Activated CD4-positive, alpha-beta memory T cell treated with anti-CD3 and anti-CD28 coated beads for 36 hours (primary cell): ENCODE measurements at regions of chr12 and their contacts with region 1.

Region 1: DNA sequence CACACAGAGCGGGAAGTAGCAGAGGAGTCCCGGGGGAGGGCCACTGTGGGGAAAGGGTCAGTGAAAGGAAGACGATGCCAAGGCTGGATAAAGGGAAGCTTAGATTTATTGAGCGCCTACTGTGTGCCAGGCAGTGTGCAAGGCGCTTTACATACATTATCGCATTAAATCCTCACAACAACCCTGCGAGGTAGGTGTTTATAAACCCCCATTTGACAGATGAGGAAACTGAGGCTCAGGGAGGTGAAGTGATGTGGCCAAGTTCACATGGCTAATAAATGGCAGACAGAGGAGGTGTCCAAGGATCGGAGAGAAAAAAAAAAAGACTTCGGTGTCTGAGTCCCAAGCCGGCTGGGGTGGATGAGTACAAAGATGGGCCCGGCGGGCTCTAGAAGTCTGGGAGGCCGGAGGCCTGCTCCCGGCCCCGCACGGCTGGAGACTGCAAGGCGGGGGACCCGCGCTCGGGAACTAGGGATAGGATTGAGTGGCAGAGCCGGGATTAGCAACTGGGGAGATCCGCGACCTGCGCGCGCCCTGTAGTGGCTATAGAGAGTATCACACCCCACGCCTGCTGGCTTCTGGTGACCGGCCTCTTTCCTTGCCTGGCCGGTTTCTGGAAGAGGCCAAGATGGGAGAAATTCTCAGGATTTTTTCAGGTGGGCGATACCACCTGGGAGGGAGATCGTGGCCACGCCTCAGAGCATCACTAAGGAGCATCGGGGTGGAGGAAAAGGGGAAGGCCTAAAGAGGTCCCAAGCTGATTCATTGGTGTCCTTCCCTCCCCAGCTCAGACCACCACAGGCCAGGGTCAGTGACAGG is 3.9 kb downstream of the DDN start:
- DNase-seq: peak; percentile 72
- H3K4me3 Mint-ChIP-seq: no peak overlapping the region
- H3K27ac Mint-ChIP-seq: no peak overlapping the region
- H3K4me1 Mint-ChIP-seq: peaks cover 32% of the 10 kb centered on the region
- H3K27me3 Mint-ChIP-seq: peaks cover 37% of the 10 kb centered on the region

Region 2: GRCh38 chr12:48924617-48925303 is 70.5 kb before region 1 on chr12:
- CTCF ChIA-PET with region 1: interaction called, 4 read pairs
- POLR2A ChIA-PET with region 1: interaction called, 4 read pairs
- intact Hi-C with region 1: loop called (anchors 2 kb)
- DNase-seq: peak; percentile 82
- H3K4me3 Mint-ChIP-seq: peak overlapping the region; percentile 88
- H3K27ac Mint-ChIP-seq: peak overlapping the region; percentile 94
- H3K4me1 Mint-ChIP-seq: peaks cover 47% of the 10 kb centered on the region
- H3K27me3 Mint-ChIP-seq: no peaks in the 10 kb centered on the region

Region 3: GRCh38 chr12:48957141-48958048 is 37.9 kb before region 1 on chr12 and contains the start of gene ARF3:
- CTCF ChIA-PET with region 1: interaction called, 12 read pairs
- POLR2A ChIA-PET with region 1: interaction called, 3 read pairs
- intact Hi-C with region 1: no loop called
- DNase-seq: peak; percentile 95
- H3K4me3 Mint-ChIP-seq: peak within 1 kb of the TSS; percentile 86
- H3K27ac Mint-ChIP-seq: peak within 1 kb of the TSS; percentile 83
- H3K4me1 Mint-ChIP-seq: peaks cover 28% of the 10 kb centered on the region
- H3K27me3 Mint-ChIP-seq: no peaks in the 10 kb centered on the region
- total RNA-seq, gene ARF3: 110 to 121 TPM

Region 4: GRCh38 chr12:49018261-49019119 is 23.2 kb after region 1 on chr12 and contains the start of gene PRKAG1:
- CTCF ChIA-PET with region 1: interaction called, 46 read pairs
- POLR2A ChIA-PET with region 1: interaction called, 5 read pairs
- intact Hi-C with region 1: loop called (anchors 1 kb)
- DNase-seq: peak; percentile 97
- H3K4me3 Mint-ChIP-seq: peak within 1 kb of the TSS; percentile 95
- H3K27ac Mint-ChIP-seq: peak within 1 kb of the TSS; percentile 92
- H3K4me1 Mint-ChIP-seq: peaks cover 40% of the 10 kb centered on the region
- H3K27me3 Mint-ChIP-seq: no peaks in the 10 kb centered on the region
- total RNA-seq, gene PRKAG1: 52.0 to 55.8 TPM

Region 5: GRCh38 chr12:49138587-49138986 is 143.3 kb after region 1 on chr12:
- CTCF ChIA-PET with region 1: no interaction called
- POLR2A ChIA-PET with region 1: no interaction called
- intact Hi-C with region 1: no loop called
- DNase-seq: no peak
- H3K4me3 Mint-ChIP-seq: no peak overlapping the region
- H3K27ac Mint-ChIP-seq: no peak overlapping the region
- H3K4me1 Mint-ChIP-seq: peaks cover 7% of the 10 kb centered on the region
- H3K27me3 Mint-ChIP-seq: no peaks in the 10 kb centered on the region

Region 6: DNA sequence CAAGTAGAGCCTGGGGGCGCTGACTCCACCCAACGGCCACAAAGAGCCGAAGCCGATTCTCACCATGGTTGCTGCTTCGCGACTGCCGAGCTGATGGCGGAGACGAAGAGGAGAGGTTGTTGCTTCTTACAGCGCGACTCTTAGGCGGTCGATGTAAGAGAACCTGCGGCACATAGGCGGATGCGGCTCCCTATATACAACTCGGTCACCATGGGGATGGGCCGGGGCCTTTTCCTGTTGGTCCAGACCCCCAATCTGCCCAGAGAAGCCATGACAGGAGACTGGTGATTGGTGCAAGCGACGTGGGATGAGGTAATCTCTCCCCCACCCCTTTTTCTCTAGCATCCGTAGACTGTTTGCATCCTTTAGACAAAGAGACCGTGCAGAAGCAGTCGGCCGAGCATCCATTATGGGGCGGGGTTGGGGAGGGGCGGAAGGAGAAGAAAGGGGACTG is 193.7 kb after region 1 on chr12 and contains the start of gene TUBA1A:
- CTCF ChIA-PET with region 1: no interaction called
- POLR2A ChIA-PET with region 1: no interaction called
- intact Hi-C with region 1: no loop called
- DNase-seq: peak; percentile 97
- H3K4me3 Mint-ChIP-seq: peak within 1 kb of the TSS; percentile 90
- H3K27ac Mint-ChIP-seq: peak within 1 kb of the TSS; percentile 95
- H3K4me1 Mint-ChIP-seq: peaks cover 16% of the 10 kb centered on the region
- H3K27me3 Mint-ChIP-seq: no peaks in the 10 kb centered on the region
- total RNA-seq, gene TUBA1A: 86.4 to 88.7 TPM

Region 7: DNA sequence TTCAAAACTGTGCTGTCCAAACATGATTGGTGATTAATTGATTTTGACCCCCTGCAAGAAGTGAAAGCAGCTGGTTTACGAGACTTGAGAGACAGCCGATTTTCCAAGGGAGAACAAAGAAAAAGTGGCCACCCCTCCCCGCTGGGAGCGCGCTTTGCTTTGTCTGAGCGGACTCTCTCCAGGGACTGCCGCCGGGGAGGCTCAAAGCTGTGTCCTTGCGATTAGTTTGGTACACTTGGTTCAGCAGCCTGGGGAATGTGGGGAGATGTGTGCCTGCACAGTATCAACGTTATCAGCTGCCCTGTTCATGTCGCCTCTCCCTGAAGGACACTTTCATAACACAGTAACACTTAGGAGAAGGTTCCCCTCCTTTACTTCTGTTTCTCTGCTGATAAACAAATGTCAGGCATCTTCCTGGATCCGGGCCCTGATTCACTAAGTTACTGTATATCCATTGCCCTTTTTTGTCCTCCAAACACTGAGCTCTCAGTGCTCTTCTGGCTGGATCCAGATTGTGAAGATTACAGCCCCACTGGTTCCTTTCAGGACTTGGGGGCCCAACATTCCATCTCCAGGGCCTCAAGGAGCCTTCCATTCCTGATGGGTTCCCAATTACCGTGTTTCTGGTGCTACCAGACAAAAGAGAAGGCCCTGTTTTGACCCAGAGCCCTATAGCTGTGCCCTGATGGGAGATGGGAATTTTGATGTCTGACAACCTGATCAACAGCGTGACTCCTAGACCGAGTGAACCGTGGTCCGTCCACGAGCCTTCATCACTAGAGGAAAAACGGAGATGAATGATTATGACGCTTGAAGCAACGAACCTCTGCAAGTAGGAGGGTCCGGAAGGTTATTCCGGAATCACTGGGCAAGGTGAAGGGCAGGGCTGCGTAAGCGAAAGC is 237.9 kb after region 1 on chr12:
- CTCF ChIA-PET with region 1: interaction called, 3 read pairs
- POLR2A ChIA-PET with region 1: no interaction called
- intact Hi-C with region 1: loop called (anchors 1 kb)
- DNase-seq: no peak
- H3K4me3 Mint-ChIP-seq: no peak overlapping the region
- H3K27ac Mint-ChIP-seq: no peak overlapping the region
- H3K4me1 Mint-ChIP-seq: peaks cover 16% of the 10 kb centered on the region
- H3K27me3 Mint-ChIP-seq: no peaks in the 10 kb centered on the region